Mammary epithelial cell (primary cell): ENCODE measurements at regions of chr5 and their contacts with region 1.

Region 1: GRCh38 chr5:135426102-135427082 is 20.8 kb downstream of the DCANP1 start:
- DNase-seq: peak; percentile 49
- H3K4me3 ChIP-seq: no peak overlapping the region
- H3K27ac ChIP-seq: no peak overlapping the region
- H3K4me1 ChIP-seq: no peaks in the 10 kb centered on the region
- H3K27me3 ChIP-seq: no peaks in the 10 kb centered on the region
- CTCF ChIP-seq: peak; percentile 86 to 89

Region 2: GRCh38 chr5:135208903-135209721 is 217.3 kb before region 1 on chr5:
- CTCF ChIA-PET with region 1: interaction called, 5 read pairs
- dilution Hi-C with region 1: no loop called
- in situ Hi-C with region 1: no loop called
- intact Hi-C with region 1: loop called (anchors 10 kb)
- DNase-seq: peak; percentile 74
- H3K4me3 ChIP-seq: no peak overlapping the region
- H3K27ac ChIP-seq: no peak overlapping the region
- H3K4me1 ChIP-seq: peaks cover 6% of the 10 kb centered on the region
- H3K27me3 ChIP-seq: no peaks in the 10 kb centered on the region
- CTCF ChIP-seq: peak in 1 of 2 donors; percentile 21

Region 3: DNA sequence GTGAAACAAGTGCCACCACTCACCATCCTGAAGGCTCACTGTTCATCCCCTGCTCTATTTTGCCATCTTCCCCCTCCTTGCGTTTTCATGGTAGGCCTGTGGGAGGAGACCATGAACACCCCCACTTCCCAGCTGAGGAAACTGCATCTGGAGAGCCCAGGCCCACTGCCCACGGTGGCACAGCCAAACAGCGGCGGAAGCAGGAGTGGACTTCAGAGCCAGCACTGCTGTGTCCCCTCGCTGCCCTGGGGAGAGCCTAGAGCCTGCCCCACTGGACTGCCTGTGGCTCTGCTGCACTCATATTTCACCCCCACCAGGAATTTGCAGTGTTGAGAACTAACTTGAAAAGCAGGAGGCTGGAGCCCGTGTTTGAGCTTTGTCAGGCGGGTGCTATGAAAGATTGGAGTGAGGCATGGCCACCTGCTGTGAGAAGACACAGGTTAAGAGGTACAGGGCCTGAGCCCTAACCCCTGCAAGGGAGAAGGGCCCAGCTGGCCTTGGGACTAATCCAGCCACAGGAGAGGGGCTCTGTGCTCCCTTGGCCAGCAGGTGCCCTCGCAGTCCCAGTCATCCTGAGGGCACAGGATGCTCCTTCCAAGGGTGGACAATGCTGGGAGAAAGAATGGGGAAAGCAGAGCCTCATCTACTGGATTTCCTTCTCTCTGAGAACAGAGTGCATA is 106.3 kb before region 1 on chr5:
- CTCF ChIA-PET with region 1: no interaction called
- dilution Hi-C with region 1: no loop called
- in situ Hi-C with region 1: no loop called
- intact Hi-C with region 1: no loop called
- DNase-seq: no peak
- H3K4me3 ChIP-seq: no peak overlapping the region
- H3K27ac ChIP-seq: no peak overlapping the region
- H3K4me1 ChIP-seq: no peaks in the 10 kb centered on the region
- H3K27me3 ChIP-seq: no peaks in the 10 kb centered on the region
- CTCF ChIP-seq: peak in 1 of 2 donors; percentile 5

Region 4: DNA sequence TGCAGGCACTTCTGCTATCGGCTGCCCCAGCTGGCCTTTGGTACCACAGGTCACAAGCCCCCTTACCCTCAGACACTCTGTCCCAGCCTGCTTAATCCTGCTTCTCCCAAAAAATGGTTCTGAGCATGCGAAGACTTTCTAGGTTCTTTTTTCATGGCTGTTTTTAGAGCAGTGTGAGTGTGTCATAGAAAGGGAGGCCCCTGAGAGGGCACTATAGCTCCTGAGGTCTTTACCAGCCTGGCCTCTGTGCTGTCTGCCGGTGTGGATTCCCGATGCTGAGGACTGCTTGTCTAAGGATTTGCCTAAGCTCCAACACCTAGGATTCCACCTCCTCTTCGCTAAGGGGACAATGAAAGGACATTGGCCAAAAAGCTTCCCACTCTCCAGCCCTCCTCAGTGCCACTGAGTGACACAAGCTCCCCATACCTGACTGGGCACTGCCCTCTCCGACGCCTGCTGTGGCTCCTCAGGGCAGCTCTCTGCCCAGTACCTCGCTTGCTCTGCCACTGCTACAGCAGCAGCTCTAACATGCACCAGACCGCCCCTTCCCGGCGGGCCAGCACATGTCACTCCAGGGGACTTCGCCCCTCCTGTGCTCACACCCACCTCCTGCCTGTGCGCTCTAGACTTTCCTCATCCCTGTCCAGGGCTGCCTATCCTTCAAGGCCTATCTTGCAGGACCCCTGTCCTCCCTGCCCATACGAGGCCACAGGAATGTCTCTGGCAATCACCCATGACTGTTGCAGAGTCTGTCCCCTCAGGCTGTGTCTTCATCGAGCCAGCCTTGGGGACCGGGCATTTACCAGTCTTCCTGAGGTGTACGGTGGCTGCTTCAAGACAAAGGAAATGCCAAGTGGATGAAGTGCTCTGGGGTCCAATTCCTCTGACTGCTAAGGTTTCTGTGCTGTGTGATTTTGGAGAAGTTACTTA is 48.4 kb before region 1 on chr5:
- CTCF ChIA-PET with region 1: interaction called, 4 read pairs
- dilution Hi-C with region 1: no loop called
- in situ Hi-C with region 1: no loop called
- intact Hi-C with region 1: loop called (anchors 2 kb)
- DNase-seq: peak; percentile 40
- H3K4me3 ChIP-seq: no peak overlapping the region
- H3K27ac ChIP-seq: peak overlapping the region; percentile 26
- H3K4me1 ChIP-seq: peaks cover 42% of the 10 kb centered on the region
- H3K27me3 ChIP-seq: no peaks in the 10 kb centered on the region
- CTCF ChIP-seq: no peak

Region 5: GRCh38 chr5:135944967-135945560 is 518.7 kb after region 1 on chr5:
- CTCF ChIA-PET with region 1: no interaction called
- dilution Hi-C with region 1: no loop called
- in situ Hi-C with region 1: no loop called
- intact Hi-C with region 1: no loop called
- DNase-seq: peak; percentile 63
- H3K4me3 ChIP-seq: no peak overlapping the region
- H3K27ac ChIP-seq: no peak overlapping the region
- H3K4me1 ChIP-seq: no peaks in the 10 kb centered on the region
- H3K27me3 ChIP-seq: no peaks in the 10 kb centered on the region
- CTCF ChIP-seq: peak; percentile 51 to 75